AG04449 (cell line): ENCODE measurements at regions of chr10 and their contacts with region 1.

Region 1: DNA sequence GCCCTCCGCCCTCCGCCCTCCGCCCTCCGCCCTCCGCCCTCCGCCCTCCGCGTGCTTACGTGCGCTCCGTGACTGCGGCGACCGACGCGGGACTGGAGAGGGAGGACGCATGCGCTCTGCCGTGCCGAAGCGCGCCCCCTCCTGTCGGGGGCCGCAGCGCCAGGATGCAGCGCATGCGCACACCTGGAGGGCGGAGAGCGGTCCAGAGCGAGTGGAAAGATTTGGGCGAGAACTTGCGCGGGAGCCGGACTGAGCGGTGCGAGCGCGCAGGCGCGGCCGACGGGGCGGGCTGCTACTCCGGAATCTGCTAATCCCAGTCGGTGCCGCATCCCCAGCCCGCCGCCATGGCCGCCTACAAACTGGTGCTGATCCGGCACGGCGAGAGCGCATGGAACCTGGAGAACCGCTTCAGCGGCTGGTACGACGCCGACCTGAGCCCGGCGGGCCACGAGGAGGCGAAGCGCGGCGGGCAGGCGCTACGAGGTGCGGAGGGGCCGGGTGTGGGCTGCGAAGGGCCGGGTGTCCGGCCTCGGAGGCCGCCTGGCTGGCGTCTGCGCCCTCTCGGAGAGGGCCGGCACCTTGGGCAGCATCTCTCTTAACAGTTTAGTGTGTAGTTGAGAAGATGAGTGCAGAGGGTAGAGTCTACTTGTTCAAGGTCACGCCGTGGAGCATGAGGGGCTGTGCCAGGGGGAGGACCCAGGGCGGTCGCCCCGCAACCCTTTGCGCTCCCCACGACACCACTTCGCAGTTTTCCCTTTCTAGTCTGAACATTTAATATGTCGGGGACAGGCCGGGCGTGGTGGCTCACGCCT is at the start of gene PGAM1:
- DNase-seq: peak; percentile 66
- H3K4me3 ChIP-seq: peak within 1 kb of the TSS; percentile 96
- CTCF ChIP-seq: peak; percentile 98

Region 2: GRCh38 chr10:97400665-97401454 is 25.3 kb before region 1 on chr10 and contains the start of gene RRP12:
- CTCF ChIA-PET with region 1: interaction called, 48 read pairs
- POLR2A ChIA-PET with region 1: interaction called, 4 read pairs
- DNase-seq: peak; percentile 76
- H3K4me3 ChIP-seq: peak within 1 kb of the TSS; percentile 94
- CTCF ChIP-seq: peak; percentile 17

Region 3: DNA sequence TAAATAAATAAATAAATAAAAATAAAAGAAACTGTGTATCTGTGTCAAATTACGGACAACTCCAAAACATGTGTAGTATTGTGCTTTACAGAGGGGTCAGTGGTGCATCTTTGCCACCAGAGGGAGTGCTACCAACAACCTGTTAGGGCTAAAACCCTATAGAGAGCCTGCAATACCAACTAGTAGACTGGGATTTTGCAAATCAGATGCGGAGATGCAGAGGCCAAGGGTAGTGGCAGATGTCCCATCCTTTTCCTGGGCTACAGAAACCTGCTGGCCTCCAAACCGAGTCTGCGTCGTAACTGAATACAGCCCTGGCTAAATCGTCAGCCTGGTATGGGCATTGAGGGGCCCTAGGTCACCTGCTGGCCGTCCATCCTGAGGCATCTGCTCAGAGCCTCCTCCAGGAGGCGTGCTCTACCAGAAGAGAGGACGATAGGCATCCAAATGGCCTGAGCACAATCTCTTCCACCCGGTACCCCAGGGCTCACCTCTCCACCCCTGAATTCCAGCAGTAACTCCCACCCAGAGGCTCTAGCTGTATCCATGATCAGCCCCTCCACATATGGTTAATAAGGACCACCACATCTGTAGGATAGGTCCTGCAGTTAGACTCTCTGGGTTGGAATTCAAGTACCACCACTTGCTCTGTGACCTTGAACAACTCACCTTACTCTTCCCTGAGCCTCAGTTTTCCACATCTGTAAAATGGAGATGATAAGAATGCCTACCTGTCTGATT is 18.8 kb before region 1 on chr10:
- CTCF ChIA-PET with region 1: interaction called, 108 read pairs
- POLR2A ChIA-PET with region 1: no interaction called
- DNase-seq: no peak
- H3K4me3 ChIP-seq: no peak overlapping the region
- CTCF ChIP-seq: peak; percentile 79

Region 4: GRCh38 chr10:97454330-97455036 is 28.3 kb after region 1 on chr10:
- CTCF ChIA-PET with region 1: no interaction called
- POLR2A ChIA-PET with region 1: no interaction called
- DNase-seq: no peak
- H3K4me3 ChIP-seq: no peak overlapping the region
- CTCF ChIP-seq: no peak